Activated naive CD4-positive, alpha-beta T cell treated with anti-CD3 and anti-CD28 coated beads for 36 hours (primary cell): ENCODE measurements at regions of chrX and their contacts with region 1.

Region 1: GRCh38 chrX:47233337-47234113 is 716 bp downstream of the USP11 start:
- DNase-seq: peak; percentile 96
- H3K4me3 Mint-ChIP-seq: peak overlapping the region; percentile 85
- H3K27ac Mint-ChIP-seq: peak overlapping the region; percentile 92
- H3K4me1 Mint-ChIP-seq: peaks cover 20% of the 10 kb centered on the region
- H3K27me3 Mint-ChIP-seq: no peaks in the 10 kb centered on the region

Region 2: DNA sequence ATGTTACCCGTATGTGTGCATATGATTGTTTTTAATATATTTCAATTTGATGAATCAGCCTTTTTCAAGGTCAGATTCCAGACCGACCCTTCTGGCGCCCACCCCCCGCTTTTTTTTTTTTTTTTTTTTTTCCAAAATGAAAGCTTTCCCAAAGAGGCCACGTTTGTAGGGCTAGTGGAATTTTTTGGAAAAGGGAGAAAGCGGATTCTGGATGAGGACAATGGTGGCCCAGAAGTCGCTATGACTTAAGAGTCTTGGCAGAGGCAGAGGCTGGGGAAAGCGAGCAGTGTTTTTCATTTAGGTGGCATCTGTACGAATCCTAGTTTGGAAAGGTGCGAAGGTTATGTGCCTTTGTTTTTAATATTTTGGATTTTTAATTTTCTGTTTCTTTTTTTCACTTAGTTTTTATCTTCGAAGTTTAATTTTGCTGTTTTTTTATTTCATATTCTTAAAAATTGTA is 103.6 kb before region 1 on chrX:
- CTCF ChIA-PET with region 1: no interaction called
- intact Hi-C with region 1: no loop called
- DNase-seq: no peak
- H3K4me3 Mint-ChIP-seq: peak overlapping the region; percentile 99
- H3K27ac Mint-ChIP-seq: peak overlapping the region; percentile 98
- H3K4me1 Mint-ChIP-seq: peaks cover 5% of the 10 kb centered on the region
- H3K27me3 Mint-ChIP-seq: no peaks in the 10 kb centered on the region

Region 3: DNA sequence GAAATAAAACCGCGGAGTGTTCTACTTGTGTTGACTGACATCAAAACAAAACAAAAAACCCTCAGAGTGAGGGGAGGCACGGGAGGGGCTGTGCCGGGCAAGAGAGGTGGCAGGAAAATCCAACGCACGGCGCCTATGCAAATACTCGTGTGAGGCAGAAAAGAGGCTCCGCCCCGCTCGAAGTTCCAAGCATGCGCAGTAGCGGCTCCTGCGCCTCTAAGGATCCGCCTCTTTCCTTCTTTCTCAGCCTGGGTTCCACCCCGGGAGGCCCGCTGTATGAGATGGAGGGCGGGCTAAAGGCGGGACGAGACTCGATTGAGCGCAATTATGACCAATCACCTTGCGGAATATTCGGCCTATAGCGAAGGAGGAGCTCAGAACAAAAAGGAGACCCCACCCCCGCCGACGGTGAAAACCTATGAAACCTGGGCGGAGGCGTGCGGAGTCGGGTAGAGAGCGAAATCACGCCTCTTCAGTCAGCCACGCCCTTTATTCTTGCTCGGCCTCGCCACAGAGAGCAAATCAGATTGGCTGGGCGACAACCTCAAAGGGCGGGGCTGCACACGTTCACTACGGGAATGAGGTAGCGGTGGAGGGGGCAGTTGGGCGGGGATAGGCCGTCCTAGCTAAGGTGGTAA is 15.8 kb before region 1 on chrX:
- CTCF ChIA-PET with region 1: interaction called, 4 read pairs
- intact Hi-C with region 1: loop called (anchors 1 kb)
- DNase-seq: peak; percentile 98
- H3K4me3 Mint-ChIP-seq: peak overlapping the region; percentile 80
- H3K27ac Mint-ChIP-seq: peak overlapping the region; percentile 98
- H3K4me1 Mint-ChIP-seq: peaks cover 37% of the 10 kb centered on the region
- H3K27me3 Mint-ChIP-seq: no peaks in the 10 kb centered on the region

Region 4: DNA sequence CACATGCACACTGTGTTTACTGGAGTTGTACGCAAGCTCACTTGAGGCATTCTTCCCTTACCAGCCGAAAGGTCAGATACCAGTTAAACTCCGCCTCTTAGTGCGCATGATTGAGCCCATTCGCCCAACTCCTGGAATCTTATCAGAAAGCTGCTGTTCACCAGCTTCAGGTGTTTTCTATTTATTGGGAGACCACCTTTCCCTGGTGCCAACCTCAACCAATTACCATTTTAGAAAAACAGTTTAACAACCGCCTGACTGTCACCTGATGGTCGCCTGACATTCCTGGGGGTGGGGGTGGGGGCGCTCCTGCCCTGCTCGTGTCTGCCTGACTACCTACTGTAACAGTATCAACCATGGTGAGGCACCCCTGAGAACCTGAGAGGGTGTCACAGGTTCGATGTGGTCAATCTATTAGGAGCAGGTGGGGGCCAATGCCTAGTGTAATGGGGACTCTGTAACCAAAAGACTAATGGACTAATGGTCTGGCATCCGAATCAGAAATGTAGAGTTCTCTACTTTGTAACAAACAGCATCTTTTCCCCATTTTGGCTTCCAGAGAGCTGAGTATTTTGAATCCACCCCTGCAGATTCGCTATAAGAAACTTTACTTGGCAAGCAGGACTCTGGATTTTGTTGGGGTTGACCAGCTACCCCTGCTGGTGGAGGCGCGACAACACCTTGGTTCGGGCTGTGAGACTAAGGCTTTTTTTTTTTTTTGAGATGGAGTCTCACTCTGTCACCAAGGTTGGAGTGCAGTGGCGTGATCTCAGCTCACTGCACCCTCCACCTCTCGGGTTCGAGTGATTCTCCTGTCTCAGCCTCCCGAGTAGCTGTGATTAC is 78.6 kb after region 1 on chrX:
- CTCF ChIA-PET with region 1: no interaction called
- intact Hi-C with region 1: loop called (anchors 1 kb)
- DNase-seq: peak; percentile 69
- H3K4me3 Mint-ChIP-seq: no peak overlapping the region
- H3K27ac Mint-ChIP-seq: no peak overlapping the region
- H3K4me1 Mint-ChIP-seq: peaks cover 3% of the 10 kb centered on the region
- H3K27me3 Mint-ChIP-seq: no peaks in the 10 kb centered on the region

Region 5: DNA sequence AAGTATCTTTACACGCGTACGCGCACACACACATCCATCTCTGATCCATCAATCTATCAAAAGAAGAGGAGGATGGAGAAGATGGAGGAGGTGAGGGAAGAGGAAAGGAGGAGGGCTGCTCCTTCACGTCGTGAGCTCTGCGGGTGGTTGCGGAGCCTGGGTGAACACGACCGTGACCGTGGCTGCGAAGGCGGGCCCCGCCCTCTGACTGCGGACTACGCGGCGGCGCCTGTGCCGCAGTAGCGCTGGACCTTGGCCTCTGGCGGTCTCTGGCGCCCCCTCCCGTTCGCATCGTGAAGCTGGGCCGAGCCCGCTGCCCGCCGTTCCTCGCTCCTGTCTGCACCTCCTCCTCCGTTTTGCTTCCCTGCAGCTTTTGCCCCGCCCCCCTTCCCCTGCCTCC is 289.8 kb after region 1 on chrX:
- CTCF ChIA-PET with region 1: no interaction called
- intact Hi-C with region 1: loop called (anchors 1 kb)
- DNase-seq: peak; percentile 82
- H3K4me3 Mint-ChIP-seq: peak overlapping the region; percentile 62
- H3K27ac Mint-ChIP-seq: no peak overlapping the region
- H3K4me1 Mint-ChIP-seq: no peaks in the 10 kb centered on the region
- H3K27me3 Mint-ChIP-seq: no peaks in the 10 kb centered on the region